A549 (cell line): ENCODE measurements at regions of chr2 and their contacts with region 1.

Region 1: GRCh38 chr2:121649596-121650314 is 493 bp upstream of the CLASP1 start:
- DNase-seq: peak; percentile 96 to 98
- ATAC-seq: peak; percentile 96 to 98
- H3K4me3 ChIP-seq: peak overlapping the region; percentile 73
- H3K27ac ChIP-seq: peak overlapping the region; percentile 91 to 93
- H3K4me1 ChIP-seq: peaks cover 20% of the 10 kb centered on the region
- CTCF ChIP-seq: no peak
- EP300 ChIP-seq: no peak
- POLR2A ChIP-seq: peak; percentile 32
- RAD21 ChIP-seq: no peak

Region 2: GRCh38 chr2:121588357-121588756 is 61.4 kb before region 1 on chr2:
- CTCF ChIA-PET with region 1: no interaction called
- POLR2A ChIA-PET with region 1: no interaction called
- DNase-seq: no peak
- ATAC-seq: no peak
- H3K4me3 ChIP-seq: no peak overlapping the region
- H3K27ac ChIP-seq: peak overlapping the region in 1 of 2 experiments; percentile 3; a peak in 1 of 6 replicates
- H3K4me1 ChIP-seq: peaks cover 5% of the 10 kb centered on the region; the same call in 2 of the 3 replicates
- CTCF ChIP-seq: no peak
- EP300 ChIP-seq: no peak
- POLR2A ChIP-seq: no peak
- RAD21 ChIP-seq: no peak

Region 3: DNA sequence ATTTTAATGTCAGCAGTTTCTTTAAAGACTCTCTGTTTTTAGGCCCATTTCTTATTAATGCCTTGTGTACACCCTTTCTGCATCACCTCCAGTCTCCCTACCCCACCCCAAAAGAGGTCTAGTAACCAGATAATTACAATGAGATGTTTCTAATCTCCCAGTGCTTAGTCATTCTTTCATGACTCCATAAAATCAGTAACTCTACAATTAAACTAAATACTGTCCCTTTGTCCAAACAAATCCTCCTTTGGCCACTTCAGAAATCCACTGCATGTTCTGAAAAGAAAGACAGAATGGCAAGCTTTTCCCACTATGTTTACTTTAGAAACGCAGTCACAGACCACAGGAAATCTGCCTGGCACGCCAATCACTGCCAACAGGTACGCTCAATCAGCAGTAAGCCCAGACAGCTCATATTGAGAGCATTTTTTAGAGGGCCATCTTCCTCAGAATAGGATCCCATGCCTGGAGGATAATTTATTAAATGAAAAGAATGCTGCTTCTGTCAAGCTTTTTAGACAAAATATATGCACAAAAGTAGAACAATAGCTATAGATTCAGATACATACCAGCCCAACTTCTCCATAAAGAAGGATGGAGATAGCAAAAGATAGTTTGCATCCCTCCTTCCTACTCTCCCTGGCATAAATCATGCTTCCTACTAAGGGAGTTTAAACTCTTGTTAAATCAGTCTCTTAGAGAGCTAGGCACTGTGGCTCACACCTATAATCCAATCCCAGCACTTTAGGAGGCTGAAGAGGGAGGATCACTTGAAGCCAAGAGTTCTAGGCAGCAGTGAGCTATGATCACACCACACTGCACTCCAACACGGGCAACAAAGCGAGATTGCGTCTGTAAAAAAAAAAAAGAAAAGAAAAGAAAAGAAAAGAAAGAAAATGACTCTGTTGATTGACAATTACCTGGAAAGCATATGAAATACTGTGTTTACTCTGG is 15.1 kb before region 1 on chr2:
- CTCF ChIA-PET with region 1: no interaction called
- POLR2A ChIA-PET with region 1: interaction called, 15 read pairs
- DNase-seq: peak; percentile 31 to 61
- ATAC-seq: peak; percentile 86 to 92
- H3K4me3 ChIP-seq: no peak overlapping the region
- H3K27ac ChIP-seq: peak overlapping the region; percentile 69 to 78
- H3K4me1 ChIP-seq: peaks cover 36% of the 10 kb centered on the region
- CTCF ChIP-seq: no peak
- EP300 ChIP-seq: no peak
- POLR2A ChIP-seq: no peak
- RAD21 ChIP-seq: no peak

Region 4: GRCh38 chr2:121682396-121683298 is 32.9 kb after region 1 on chr2:
- CTCF ChIA-PET with region 1: no interaction called
- POLR2A ChIA-PET with region 1: no interaction called
- DNase-seq: no peak
- ATAC-seq: no peak
- H3K4me3 ChIP-seq: no peak overlapping the region
- H3K27ac ChIP-seq: no peak overlapping the region
- H3K4me1 ChIP-seq: no peaks in the 10 kb centered on the region
- CTCF ChIP-seq: no peak
- EP300 ChIP-seq: no peak
- POLR2A ChIP-seq: no peak
- RAD21 ChIP-seq: no peak

Region 5: DNA sequence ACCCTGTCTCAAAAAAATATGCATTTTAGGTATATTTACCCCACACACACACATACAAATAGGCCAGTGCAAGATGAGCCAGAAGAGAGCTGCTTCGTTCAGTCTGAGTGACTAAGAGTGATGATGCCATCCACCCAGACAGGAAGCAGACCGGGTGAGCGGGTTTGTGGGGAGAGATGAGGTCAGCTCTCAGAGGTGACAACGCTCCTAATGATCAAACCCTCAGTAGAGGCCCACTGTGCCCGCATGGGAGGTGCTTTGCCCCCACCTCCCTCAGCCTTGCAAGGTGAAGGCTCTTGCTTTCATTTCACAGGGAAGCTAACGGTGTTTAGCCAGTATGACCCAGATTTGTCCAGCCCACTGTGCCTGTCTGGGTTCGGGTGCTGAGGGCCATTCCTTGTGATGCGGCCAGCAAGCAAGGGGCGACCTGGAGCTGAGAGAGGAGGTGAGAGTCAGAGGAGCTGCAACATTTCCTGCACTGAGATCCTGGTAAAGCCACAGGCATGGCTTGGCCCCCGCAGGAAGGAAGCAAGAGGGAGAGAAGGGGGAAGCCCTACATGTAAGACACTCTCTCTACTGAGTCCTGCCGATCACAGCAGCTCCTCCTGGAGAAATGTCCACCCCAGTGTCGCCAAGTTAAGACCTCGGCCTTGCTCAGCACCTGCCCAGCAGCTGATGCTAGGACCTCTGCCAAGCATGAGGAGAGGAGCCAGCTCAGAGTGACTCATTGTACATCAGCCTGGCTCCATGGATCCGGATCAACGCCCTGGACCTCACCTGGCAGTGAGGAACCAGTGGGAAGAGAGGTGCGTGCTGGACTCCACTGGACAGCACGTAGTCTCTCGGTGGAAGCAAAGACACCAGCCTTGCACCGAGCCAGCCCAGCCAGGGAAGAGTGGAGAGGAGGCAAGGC is 49.9 kb after region 1 on chr2:
- CTCF ChIA-PET with region 1: interaction called, 3 read pairs
- POLR2A ChIA-PET with region 1: interaction called, 19 read pairs
- DNase-seq: peak; percentile 76 to 78
- ATAC-seq: peak; percentile 94 to 98
- H3K4me3 ChIP-seq: 0 out of 3 replicates have a peak overlapping the region, but pooled peaks have one; percentile 20
- H3K27ac ChIP-seq: peak overlapping the region; percentile 73 to 87
- H3K4me1 ChIP-seq: peaks cover 30% of the 10 kb centered on the region
- CTCF ChIP-seq: no peak
- EP300 ChIP-seq: peak in 1 of 2 experiments; percentile 32; a peak in 1 of 5 replicates
- POLR2A ChIP-seq: no peak
- RAD21 ChIP-seq: no peak